Activated T-helper 1 cell treated with anti-CD3 and anti-CD28 coated beads, Interleukin-12 subunit alpha, Interleukin-12 subunit beta, Interleukin-2, Interleukin-4 antibody, amounts not matched to agents 30 ng/mL and 10 ng/mL and 1 ng/mL, durations not matched to agents 14 hours and 24 hours and 36 hours (primary cell): ENCODE measurements at regions of chr6 and their contacts with region 1.

Region 1: DNA sequence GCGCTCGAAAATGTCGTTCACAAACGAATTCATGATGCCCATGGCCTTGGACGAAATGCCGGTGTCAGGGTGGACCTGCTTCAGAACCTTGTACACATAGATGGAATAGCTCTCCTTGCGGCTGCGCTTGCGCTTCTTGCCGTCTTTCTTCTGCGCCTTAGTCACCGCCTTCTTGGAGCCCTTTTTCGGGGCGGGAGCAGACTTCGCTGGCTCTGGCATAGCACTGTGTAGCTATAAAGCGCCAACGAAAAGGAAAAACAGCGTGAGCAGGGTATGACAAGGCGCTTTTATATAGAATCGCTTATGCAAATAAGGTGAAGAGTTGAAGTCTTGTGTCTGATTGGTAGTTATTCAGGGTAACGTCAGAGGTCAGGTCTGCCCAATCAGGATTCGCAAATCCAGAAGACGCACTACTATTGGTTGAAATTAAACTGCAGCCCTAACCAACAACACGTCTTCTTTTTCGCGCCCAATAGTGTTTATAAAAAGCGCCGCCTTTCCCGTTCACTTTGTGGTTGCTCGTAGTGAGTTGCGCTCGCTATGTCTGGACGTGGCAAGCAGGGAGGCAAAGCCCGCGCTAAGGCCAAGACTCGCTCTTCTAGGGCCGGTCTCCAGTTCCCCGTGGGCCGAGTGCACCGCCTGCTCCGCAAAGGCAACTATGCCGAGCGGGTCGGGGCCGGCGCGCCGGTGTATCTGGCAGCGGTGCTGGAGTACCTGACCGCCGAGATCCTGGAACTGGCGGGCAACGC is 114.8 kb upstream of the PRSS16 start:
- DNase-seq: peak; percentile 92
- H3K4me3 Mint-ChIP-seq: no peak overlapping the region
- H3K27ac Mint-ChIP-seq: no peak overlapping the region
- H3K4me1 Mint-ChIP-seq: peaks cover 34% of the 10 kb centered on the region
- H3K27me3 Mint-ChIP-seq: no peaks in the 10 kb centered on the region

Region 2: DNA sequence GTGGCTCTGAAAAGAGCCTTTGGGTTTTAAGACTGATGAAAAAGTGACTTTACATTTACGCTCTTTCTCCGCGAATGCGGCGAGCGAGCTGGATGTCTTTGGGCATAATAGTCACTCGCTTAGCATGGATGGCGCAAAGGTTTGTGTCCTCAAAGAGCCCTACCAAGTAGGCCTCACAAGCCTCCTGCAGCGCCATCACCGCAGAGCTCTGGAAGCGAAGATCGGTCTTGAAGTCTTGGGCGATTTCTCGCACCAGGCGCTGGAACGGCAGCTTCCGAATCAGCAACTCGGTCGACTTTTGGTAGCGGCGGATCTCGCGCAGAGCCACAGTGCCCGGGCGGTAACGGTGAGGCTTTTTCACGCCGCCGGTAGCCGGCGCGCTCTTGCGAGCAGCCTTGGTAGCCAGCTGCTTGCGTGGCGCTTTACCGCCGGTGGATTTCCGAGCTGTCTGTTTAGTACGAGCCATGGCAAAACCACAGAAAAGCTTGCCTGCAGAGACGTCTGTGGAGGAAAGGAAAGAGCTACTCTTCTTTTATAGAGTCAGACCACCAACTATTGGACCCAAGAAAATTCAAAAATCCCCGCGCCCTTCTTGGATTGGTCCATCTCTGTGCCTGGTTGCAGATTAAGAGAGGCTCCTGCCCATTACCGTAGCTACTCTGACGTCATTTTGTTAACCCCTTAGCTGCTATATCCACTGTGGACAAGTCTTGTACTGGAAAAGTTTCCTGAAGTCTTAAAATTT is 1100.9 kb before region 1 on chr6:
- intact Hi-C with region 1: loop called (anchors 2 kb)
- DNase-seq: peak; percentile 89
- H3K4me3 Mint-ChIP-seq: peak overlapping the region; percentile 94
- H3K27ac Mint-ChIP-seq: peak overlapping the region; percentile 98
- H3K4me1 Mint-ChIP-seq: peaks cover 89% of the 10 kb centered on the region
- H3K27me3 Mint-ChIP-seq: peaks cover 2% of the 10 kb centered on the region

Region 3: GRCh38 chr6:26196846-26197648 is 935.7 kb before region 1 on chr6:
- intact Hi-C with region 1: loop called (anchors 1 kb)
- DNase-seq: peak; percentile 84
- H3K4me3 Mint-ChIP-seq: peak overlapping the region; percentile 92
- H3K27ac Mint-ChIP-seq: peak overlapping the region; percentile 95
- H3K4me1 Mint-ChIP-seq: peaks cover 54% of the 10 kb centered on the region
- H3K27me3 Mint-ChIP-seq: no peaks in the 10 kb centered on the region

Region 4: DNA sequence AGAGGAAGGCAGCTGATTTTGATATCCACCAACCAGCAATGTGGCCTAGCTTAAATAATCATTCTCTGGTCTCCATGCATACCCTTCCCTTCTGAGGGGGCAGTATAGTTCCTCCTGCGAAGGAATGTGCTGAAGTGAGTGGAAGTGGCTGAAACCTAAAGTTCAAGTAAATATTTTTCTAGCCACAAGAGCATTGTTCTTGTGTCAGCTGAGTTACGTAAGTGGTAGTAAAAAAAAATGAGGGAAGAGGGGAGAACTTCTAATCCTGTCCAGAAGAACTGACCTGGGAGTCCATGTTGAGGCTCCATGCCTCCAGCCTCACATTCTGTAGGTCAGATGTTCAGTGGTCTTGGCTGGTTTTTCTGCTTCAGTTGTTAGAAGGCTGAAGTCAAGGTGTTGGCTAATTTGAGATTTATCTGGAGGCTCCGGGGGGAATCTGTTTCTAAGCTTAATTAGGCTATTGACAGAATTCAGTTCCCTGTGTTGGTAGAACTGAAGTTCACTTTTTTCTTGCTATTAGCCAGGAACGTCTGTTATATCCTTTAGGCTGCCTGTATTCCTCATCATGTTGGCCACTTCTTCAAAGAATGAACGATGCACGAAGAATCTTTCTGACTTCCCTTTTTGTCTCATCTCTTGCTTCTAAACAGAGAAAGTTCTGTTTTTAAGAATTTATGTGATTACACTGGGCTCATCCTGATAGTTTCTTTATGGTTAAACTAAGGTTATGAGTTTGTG is 92.3 kb before region 1 on chr6:
- intact Hi-C with region 1: no loop called
- DNase-seq: no peak
- H3K4me3 Mint-ChIP-seq: no peak overlapping the region
- H3K27ac Mint-ChIP-seq: no peak overlapping the region
- H3K4me1 Mint-ChIP-seq: no peaks in the 10 kb centered on the region
- H3K27me3 Mint-ChIP-seq: peaks cover 9% of the 10 kb centered on the region

Region 5: GRCh38 chr6:27157459-27158315 is 25.0 kb after region 1 on chr6:
- intact Hi-C with region 1: loop called (anchors 1 kb)
- DNase-seq: peak; percentile 70
- H3K4me3 Mint-ChIP-seq: peak overlapping the region; percentile 77
- H3K27ac Mint-ChIP-seq: peak overlapping the region; percentile 80
- H3K4me1 Mint-ChIP-seq: peaks cover 47% of the 10 kb centered on the region
- H3K27me3 Mint-ChIP-seq: peaks cover 2% of the 10 kb centered on the region

Region 6: DNA sequence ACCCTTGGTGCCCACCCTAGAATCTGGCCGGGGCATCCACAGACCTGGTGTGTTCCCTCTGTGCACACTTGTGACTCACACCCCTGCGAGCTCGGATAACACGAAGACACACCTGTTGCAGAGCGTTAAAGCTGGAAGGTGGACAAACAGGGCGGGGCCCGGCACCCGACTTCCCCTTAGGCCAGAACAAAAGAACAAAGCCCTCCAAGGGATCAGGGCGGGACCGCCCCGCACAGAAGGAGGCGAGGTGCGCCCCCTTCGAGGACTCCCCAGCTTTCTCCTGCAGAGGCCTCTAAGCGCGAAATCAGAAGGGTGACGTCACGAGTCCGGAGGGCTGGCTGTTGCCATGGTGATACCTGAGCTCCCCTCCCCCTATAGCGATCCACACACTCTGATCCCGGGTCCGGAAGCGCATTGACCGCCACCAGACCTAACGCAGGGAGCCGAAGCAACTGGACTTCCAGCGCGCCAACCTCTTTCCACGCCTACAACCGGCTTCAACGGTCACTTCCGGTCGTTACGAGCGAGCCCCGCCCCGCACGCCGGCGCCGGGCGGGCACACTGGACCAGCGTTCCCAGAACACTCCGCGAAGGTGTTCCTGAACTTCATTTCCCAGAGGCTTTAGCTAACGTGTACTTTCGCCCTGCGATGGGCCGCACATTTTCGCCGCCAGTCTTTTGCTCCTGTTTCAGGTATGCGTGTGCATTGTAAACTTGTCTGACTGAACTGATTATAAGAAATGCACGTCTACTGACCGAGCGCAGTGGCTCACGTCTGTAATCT is 340.1 kb after region 1 on chr6 and contains the start of gene ZNF184:
- intact Hi-C with region 1: loop called (anchors 2 kb)
- DNase-seq: peak; percentile 85
- H3K4me3 Mint-ChIP-seq: peak within 1 kb of the TSS; percentile 89
- H3K27ac Mint-ChIP-seq: peak within 1 kb of the TSS; percentile 93
- H3K4me1 Mint-ChIP-seq: peaks cover 46% of the 10 kb centered on the region
- H3K27me3 Mint-ChIP-seq: no peaks in the 10 kb centered on the region
- total RNA-seq, gene ZNF184: 7.6 and 8.0 TPM in 2 replicates

Region 7: GRCh38 chr6:27864906-27865849 is 732.5 kb after region 1 on chr6:
- intact Hi-C with region 1: loop called (anchors 1 kb)
- DNase-seq: peak; percentile 80
- H3K4me3 Mint-ChIP-seq: peak overlapping the region; percentile 99
- H3K27ac Mint-ChIP-seq: peak overlapping the region; percentile 99
- H3K4me1 Mint-ChIP-seq: peaks cover 71% of the 10 kb centered on the region
- H3K27me3 Mint-ChIP-seq: peaks cover 4% of the 10 kb centered on the region